HCT116 (cell line): ENCODE measurements at regions of chr22 and their contacts with region 1.

Region 1: DNA sequence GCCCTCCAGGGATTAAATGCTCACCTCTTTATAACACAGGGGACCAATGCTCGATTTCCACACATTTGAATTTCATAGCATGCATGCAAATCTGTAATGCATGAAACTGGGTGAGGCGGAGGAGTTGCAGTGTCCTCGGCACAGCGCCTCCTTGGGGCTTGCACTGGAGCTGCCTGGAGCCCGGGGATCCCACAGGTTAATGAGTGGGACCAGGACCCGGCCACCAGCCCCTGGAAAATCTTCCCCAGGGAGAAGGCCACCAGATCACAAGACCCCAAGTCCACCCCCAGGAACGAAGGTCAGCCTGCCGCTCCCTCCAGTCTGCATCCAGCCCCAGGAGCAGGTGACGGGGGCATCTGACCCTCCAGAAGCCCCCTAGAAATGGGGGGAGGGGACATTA is 119.1 kb downstream of the MN1 start:
- DNase-seq: no peak
- ATAC-seq: peak; percentile 35; the same call in 1 of the 2 replicates
- H3K4me3 ChIP-seq: no peak overlapping the region
- H3K27ac ChIP-seq: no peak overlapping the region
- H3K4me1 ChIP-seq: peaks cover 19 to 21% of the 10 kb centered on the region in 2 experiments
- H3K27me3 ChIP-seq: no peaks in the 10 kb centered on the region
- CTCF ChIP-seq: peak in 2 of 3 experiments; percentile 68 to 73; a peak in 4 of 6 replicates
- POLR2A ChIP-seq: no peak
- RAD21 ChIP-seq: no peak

Region 2: GRCh38 chr22:27668828-27669797 is 13.3 kb before region 1 on chr22:
- CTCF ChIA-PET with region 1: interaction called, 6 read pairs
- POLR2A ChIA-PET with region 1: interaction called, 10 read pairs
- RAD21 ChIA-PET with region 1: no interaction called
- intact Hi-C with region 1: no loop called
- DNase-seq: peak; percentile 58
- ATAC-seq: peak; percentile 84
- H3K4me3 ChIP-seq: peak overlapping the region in 1 of 2 experiments; percentile 23; a peak in 1 of 4 replicates
- H3K27ac ChIP-seq: peak overlapping the region; percentile 50; the same call in 1 of the 2 replicates
- H3K4me1 ChIP-seq: peaks cover 27 to 35% of the 10 kb centered on the region in 2 experiments
- H3K27me3 ChIP-seq: no peaks in the 10 kb centered on the region
- CTCF ChIP-seq: no peak
- POLR2A ChIP-seq: no peak
- RAD21 ChIP-seq: peak; percentile 6; the same call in 1 of the 2 replicates

Region 3: GRCh38 chr22:27705408-27706080 is 23.1 kb after region 1 on chr22:
- CTCF ChIA-PET with region 1: no interaction called
- POLR2A ChIA-PET with region 1: no interaction called
- RAD21 ChIA-PET with region 1: no interaction called
- intact Hi-C with region 1: no loop called
- DNase-seq: no peak
- ATAC-seq: no peak
- H3K4me3 ChIP-seq: no peak overlapping the region
- H3K27ac ChIP-seq: no peak overlapping the region
- H3K4me1 ChIP-seq: no peaks in the 10 kb centered on the region
- H3K27me3 ChIP-seq: no peaks in the 10 kb centered on the region
- CTCF ChIP-seq: no peak
- POLR2A ChIP-seq: no peak
- RAD21 ChIP-seq: no peak

Region 4: GRCh38 chr22:27786291-27786932 is 104.0 kb after region 1 on chr22:
- CTCF ChIA-PET with region 1: no interaction called
- POLR2A ChIA-PET with region 1: no interaction called
- RAD21 ChIA-PET with region 1: no interaction called
- intact Hi-C with region 1: no loop called
- DNase-seq: no peak
- ATAC-seq: no peak
- H3K4me3 ChIP-seq: no peak overlapping the region
- H3K27ac ChIP-seq: no peak overlapping the region
- H3K4me1 ChIP-seq: no peaks in the 10 kb centered on the region
- H3K27me3 ChIP-seq: no peaks in the 10 kb centered on the region
- CTCF ChIP-seq: no peak
- POLR2A ChIP-seq: no peak
- RAD21 ChIP-seq: no peak